ENCODE measurements at regions of chr3 and their contacts with region 1.

Region 1: DNA sequence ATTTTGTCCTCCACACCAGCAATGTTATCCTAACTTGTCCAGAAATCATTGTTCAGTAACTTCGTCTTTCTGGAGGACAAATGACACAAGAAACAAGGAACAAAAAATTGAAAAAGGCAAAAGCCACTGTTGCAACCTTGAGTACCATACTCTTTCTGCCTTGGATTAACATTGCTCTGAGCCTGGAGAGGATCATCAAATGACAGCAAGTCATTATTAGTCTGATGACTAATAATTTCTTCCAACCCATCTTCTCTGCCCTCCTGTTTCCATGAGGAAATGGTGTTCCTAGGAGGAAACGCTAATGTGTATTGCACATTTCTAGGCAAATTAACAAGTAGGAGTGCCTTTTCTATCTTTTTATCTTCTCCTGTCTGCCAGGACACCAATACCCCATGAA is 153.9 kb downstream of the PCCB start:
- DNase-seq: no peak
- ATAC-seq: no peak
- H3K4me3 ChIP-seq: no peak overlapping the region
- H3K27ac ChIP-seq: no peak overlapping the region
- H3K4me1 ChIP-seq: no peaks in the 10 kb centered on the region
- H3K27me3 ChIP-seq: no peaks in the 10 kb centered on the region
- CTCF ChIP-seq: no peak

Region 2: GRCh38 chr3:136473716-136474326 is 69.8 kb after region 1 on chr3:
- CTCF ChIA-PET with region 1: no interaction called
- POLR2A ChIA-PET with region 1: interaction called, 10 read pairs
- in situ Hi-C with region 1: no loop called
- intact Hi-C with region 1: no loop called
- DNase-seq: no peak
- ATAC-seq: no peak
- H3K4me3 ChIP-seq: no peak overlapping the region
- H3K27ac ChIP-seq: no peak overlapping the region
- H3K4me1 ChIP-seq: no peaks in the 10 kb centered on the region
- H3K27me3 ChIP-seq: no peaks in the 10 kb centered on the region
- CTCF ChIP-seq: no peak

Measured in Panc1 (cell line).